Activated CD8-positive, alpha-beta memory T cell treated with anti-CD3 and anti-CD28 coated beads, Interleukin-2, amount 10 ng/mL, durations not matched to agents 7 days and 5 days (primary cell): ENCODE measurements at regions of chr17 and their contacts with region 1.

Region 1: GRCh38 chr17:9924735-9925191 is 19.7 kb upstream of the RCVRN start:
- DNase-seq: no peak
- ATAC-seq: peak; percentile 60
- H3K4me3 Mint-ChIP-seq: no peak overlapping the region
- H3K27ac Mint-ChIP-seq: no peak overlapping the region
- H3K4me1 Mint-ChIP-seq: no peaks in the 10 kb centered on the region
- H3K27me3 Mint-ChIP-seq: no peaks in the 10 kb centered on the region

Region 2: DNA sequence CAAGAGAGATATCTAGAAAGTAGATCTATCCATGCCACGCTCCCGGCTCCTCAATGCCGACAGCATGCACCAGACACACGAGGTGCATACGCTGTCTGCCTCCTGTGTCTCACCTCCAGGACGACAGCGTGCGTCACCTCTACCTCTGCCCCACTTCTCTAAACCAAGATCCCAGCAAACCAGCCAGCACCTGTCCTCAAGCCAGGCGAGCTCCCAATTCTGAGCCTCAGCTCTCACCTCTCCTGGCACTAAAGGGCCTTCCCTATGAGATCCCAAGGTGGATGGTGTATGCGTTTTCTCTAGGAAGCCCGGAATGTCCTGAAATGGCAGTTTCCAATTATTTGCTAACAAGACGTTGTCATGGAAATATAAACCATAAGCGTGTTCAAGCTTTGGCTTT is 16.5 kb after region 1 on chr17:
- CTCF ChIA-PET with region 1: no interaction called
- DNase-seq: no peak
- ATAC-seq: no peak
- H3K4me3 Mint-ChIP-seq: no peak overlapping the region
- H3K27ac Mint-ChIP-seq: no peak overlapping the region
- H3K4me1 Mint-ChIP-seq: no peaks in the 10 kb centered on the region
- H3K27me3 Mint-ChIP-seq: no peaks in the 10 kb centered on the region

Region 3: GRCh38 chr17:10226930-10227685 is 302.3 kb after region 1 on chr17:
- CTCF ChIA-PET with region 1: interaction called, 19 read pairs
- DNase-seq: peak; percentile 44
- ATAC-seq: no peak
- H3K4me3 Mint-ChIP-seq: no peak overlapping the region
- H3K27ac Mint-ChIP-seq: no peak overlapping the region
- H3K4me1 Mint-ChIP-seq: no peaks in the 10 kb centered on the region
- H3K27me3 Mint-ChIP-seq: no peaks in the 10 kb centered on the region